GM13976 (cell line): ENCODE measurements at regions of chr4 and their contacts with region 1.

Region 1: GRCh38 chr4:72701987-72702819 is 133.2 kb upstream of the ADAMTS3 start:
- DNase-seq: peak; percentile 28
- CTCF ChIP-seq: peak; percentile 29

Region 2: DNA sequence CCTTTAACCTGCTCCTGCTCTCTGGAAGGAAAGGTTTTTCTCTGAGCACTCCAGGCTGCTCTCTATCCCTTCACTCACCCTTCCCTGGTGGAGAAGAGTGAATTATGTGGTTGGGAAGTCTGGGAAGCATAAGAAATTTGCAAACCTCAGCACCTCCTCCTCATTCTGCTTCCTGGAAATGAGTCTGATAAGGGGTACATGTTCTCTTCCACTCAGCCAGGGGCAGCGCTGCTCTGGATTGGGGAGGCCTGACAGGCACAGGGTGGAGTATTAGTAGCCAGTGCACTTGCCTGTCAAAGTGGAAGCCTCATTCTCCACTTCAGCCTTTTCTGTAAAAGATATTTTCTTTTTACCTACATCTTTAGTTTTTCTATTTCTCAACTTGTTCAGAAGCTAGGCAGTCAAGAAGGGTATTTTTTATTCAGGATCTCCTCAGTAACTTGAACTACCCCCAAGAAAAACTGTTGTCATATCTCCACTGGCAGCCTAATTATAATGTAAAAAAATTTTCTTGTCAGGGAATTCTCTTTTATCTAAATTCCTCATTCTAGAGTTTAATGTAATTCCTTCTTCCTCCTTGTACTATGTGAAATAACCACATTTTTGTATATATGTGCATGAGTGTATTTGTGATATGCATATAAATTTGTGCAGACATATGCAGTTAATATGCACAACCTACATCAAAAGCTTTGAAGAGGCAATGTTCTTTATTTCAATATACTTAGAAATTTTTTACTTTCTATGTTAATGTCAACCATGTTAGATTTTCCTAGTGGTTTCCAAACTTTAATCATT is 148.5 kb before region 1 on chr4:
- in situ Hi-C with region 1: no loop called
- DNase-seq: no peak
- CTCF ChIP-seq: no peak

Region 3: GRCh38 chr4:72567821-72568675 is 134.2 kb before region 1 on chr4:
- in situ Hi-C with region 1: no loop called
- DNase-seq: no peak
- CTCF ChIP-seq: no peak

Region 4: GRCh38 chr4:72779241-72779640 is 77.0 kb after region 1 on chr4:
- in situ Hi-C with region 1: no loop called
- DNase-seq: no peak
- CTCF ChIP-seq: no peak

Region 5: GRCh38 chr4:73019462-73020047 is 317.4 kb after region 1 on chr4:
- in situ Hi-C with region 1: loop called (anchors 10 kb)
- DNase-seq: peak; percentile 41
- CTCF ChIP-seq: peak; percentile 47

Region 6: DNA sequence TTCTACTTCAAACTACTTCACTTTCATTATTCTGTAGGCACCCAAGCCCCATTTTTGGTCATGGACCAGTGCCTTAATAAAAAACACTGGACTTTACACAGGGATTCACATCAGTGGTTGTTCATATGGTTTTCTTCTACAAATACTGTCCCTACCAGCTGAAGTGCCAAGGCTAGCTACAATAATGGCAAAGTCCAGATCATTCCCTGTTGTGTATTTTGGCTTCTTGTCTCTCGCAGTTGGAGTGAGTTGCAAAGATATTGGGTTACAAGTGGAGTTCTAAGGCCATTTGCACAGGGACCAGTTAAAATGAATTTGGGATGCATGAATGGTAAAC is 573.1 kb after region 1 on chr4:
- in situ Hi-C with region 1: loop called (anchors 25 kb)
- DNase-seq: no peak
- CTCF ChIP-seq: no peak